Common myeloid progenitor, CD34-positive (primary cell): ENCODE measurements at regions of chr3 and their contacts with region 1.

Region 1: DNA sequence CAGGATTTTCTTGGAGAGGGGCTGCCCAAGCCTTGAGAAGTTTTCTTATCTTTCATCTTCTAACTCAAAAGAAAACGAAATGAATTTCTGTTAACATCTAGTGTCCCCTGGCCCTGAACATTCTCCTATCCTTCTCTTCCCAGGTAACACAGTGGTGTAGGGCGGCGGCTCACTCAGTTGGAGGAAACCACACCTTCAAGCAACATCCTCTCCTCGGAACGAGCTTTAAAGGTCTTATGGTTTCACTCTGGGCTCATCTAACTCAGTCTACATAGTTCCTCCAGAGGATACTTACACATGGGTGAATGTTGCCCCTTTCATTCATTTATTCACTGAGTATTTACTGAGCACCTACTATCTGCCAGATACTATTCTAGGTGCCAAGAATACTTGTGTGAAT is 31.0 kb upstream of the KLHL6 start:
- DNase-seq: no peak
- H3K4me3 ChIP-seq: no peak overlapping the region
- H3K27ac ChIP-seq: no peak overlapping the region
- H3K4me1 ChIP-seq: peaks cover 16 to 36% (median 30%) of the 10 kb centered on the region in 4 experiments
- H3K27me3 ChIP-seq: no peaks in the 10 kb centered on the region

Region 2: GRCh38 chr3:183435661-183436060 is 150.8 kb before region 1 on chr3:
- CTCF ChIA-PET with region 1: no interaction called
- POLR2A ChIA-PET with region 1: interaction called, 12 read pairs
- DNase-seq: no peak
- H3K4me3 ChIP-seq: no peak overlapping the region
- H3K27ac ChIP-seq: no peak overlapping the region
- H3K4me1 ChIP-seq: no peaks in the 10 kb centered on the region
- H3K27me3 ChIP-seq: peaks cover 0 to 4% (median 0%) of the 10 kb centered on the region in 5 experiments